ENCODE measurements at regions of chr2 and their contacts with region 1.

Region 1: DNA sequence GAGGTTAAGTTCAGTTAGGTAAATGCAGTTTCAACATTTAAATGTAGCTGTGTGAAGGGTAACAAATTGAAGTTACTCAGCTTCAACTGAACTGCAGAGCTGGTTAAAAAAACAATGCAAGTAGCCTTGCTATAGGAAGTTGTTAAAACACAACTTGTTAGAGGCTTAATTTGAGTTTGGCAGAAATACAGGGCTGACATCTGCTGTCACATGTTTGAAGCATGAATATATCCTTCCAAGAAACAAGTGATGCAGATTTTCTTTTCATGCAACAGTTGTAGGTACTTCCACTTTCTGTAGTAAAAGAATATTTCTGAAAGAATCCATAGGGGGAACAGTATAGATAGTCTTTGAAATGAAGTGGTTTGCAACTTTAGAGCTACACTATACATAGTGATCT is 208.7 kb upstream of the RASGRP3 start:
- DNase-seq: no peak
- H3K4me3 ChIP-seq: no peak overlapping the region
- H3K27ac ChIP-seq: no peak overlapping the region
- H3K4me1 ChIP-seq: peaks cover 20% of the 10 kb centered on the region
- H3K27me3 ChIP-seq: no peaks in the 10 kb centered on the region
- CTCF ChIP-seq: no peak

Region 2: DNA sequence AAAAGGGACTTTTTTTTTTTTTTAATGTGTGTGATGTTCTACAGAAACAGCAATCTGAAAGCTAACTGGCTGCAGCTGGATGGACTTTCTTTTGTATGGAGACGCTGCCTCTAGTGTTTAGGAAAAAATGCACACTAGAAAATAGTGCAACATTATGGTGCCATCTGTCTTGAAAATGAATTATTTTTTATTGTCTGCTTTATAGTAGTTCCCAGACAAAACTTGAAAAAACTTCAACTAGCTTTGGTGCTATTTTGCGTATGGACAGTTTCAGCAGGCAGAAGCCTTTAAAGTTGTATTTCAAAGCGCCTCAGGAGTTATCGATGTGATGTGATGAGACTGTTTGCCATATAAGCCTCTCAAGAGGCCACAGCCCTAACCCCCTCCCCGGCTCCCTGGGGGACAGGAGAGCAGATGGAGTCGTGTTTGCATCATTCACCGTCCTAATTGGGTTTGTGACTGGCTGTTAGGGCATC is 234.1 kb before region 1 on chr2:
- intact Hi-C with region 1: loop called (anchors 10 kb)
- DNase-seq: no peak
- H3K4me3 ChIP-seq: peak overlapping the region; percentile 43
- H3K27ac ChIP-seq: peak overlapping the region; percentile 21
- H3K4me1 ChIP-seq: peaks cover 27% of the 10 kb centered on the region
- H3K27me3 ChIP-seq: no peaks in the 10 kb centered on the region
- CTCF ChIP-seq: peak; percentile 69

Region 3: DNA sequence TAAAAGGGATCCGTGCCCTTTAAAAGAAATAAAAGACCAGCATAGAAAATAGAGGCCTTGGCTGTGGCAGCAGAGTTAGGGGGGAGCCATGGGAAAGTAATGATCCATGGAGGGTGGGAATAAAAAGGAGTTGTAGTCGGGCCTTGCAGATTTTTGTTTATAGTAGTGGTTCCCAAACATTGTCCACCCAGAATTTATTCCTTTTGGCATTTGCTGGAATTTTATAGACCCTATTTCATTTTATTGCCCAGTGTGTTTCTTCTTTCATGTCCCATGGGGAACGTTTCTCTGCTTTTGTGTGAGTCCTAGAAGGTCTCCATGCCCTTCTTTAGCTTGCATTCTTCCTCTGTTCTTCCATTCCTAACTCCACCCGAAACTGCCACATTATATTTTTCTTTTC is 98.8 kb before region 1 on chr2:
- intact Hi-C with region 1: no loop called
- DNase-seq: no peak
- H3K4me3 ChIP-seq: no peak overlapping the region
- H3K27ac ChIP-seq: no peak overlapping the region
- H3K4me1 ChIP-seq: peaks cover 20% of the 10 kb centered on the region
- H3K27me3 ChIP-seq: no peaks in the 10 kb centered on the region
- CTCF ChIP-seq: no peak

Region 4: DNA sequence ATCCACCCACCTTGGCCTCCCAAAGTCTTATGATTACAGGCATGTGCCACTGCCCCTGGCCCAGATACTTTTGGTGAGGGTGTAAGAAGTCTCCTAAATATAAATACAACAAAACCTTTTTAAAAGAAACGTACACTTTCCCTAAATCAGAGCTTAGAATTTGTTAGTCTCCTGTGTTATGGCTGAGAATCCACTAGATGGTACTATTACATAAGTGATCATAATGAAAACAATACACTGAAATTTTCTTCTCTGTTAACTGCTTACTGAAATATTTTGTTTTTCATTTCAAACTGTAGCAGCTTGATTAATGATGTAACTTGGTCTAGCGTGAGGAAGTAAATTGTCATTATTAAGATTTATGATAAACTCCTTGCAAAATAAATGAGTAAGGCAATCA is 406.2 kb after region 1 on chr2:
- intact Hi-C with region 1: no loop called
- DNase-seq: no peak
- H3K4me3 ChIP-seq: no peak overlapping the region
- H3K27ac ChIP-seq: no peak overlapping the region
- H3K4me1 ChIP-seq: no peaks in the 10 kb centered on the region
- H3K27me3 ChIP-seq: no peaks in the 10 kb centered on the region
- CTCF ChIP-seq: peak; percentile 70

Measured in left ventricle myocardium inferior (tissue), 1 donor.